GM18951 (cell line): ENCODE measurements at regions of chr9 and their contacts with region 1.

Region 1: GRCh38 chr9:97468658-97469448 is 32.6 kb upstream of the TMOD1 start:
- POLR2A ChIP-seq: no peak

Region 2: GRCh38 chr9:97615439-97616072 is 146.7 kb after region 1 on chr9:
- in situ Hi-C with region 1: loop called (anchors 10 kb)
- POLR2A ChIP-seq: no peak